ENCODE measurements at regions of chr2 and their contacts with region 1.

Region 1: GRCh38 chr2:189466660-189467059 is 25.4 kb downstream of the WDR75 start:
- DNase-seq: no peak
- H3K4me3 ChIP-seq: no peak overlapping the region
- H3K27ac ChIP-seq: no peak overlapping the region
- H3K4me1 ChIP-seq: no peaks in the 10 kb centered on the region
- H3K27me3 ChIP-seq: no peaks in the 10 kb centered on the region
- CTCF ChIP-seq: peak; percentile 67

Region 2: DNA sequence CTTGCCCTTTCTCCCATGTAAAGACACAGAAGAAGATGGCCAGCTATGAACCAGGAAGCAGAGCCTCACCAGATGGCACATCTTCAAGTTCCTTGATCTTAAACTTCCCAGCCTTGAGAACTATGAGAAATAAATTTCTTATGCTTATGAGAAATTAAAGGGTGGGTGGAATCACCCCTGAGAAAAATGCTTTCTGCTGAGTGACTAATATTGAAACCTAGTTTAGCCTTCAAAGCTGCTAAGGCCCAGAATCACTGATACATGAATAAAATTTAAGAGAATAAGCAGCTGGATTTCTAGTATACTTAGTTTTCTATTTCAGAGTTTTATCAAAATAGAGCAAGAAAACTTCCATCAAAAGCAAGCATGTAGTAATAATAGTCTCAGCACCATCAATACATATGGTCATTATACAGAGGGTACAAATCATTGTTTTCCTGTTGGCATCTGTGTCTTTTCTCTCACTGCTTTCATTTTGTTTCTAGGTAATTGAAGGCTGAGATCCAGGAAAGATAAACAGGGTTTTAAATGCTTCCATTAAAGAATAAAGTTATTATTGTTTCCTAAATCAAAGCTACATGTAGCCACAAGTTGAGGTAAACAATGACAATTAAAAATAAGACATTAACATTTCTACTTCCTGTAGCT is 233.8 kb before region 1 on chr2:
- CTCF ChIA-PET with region 1: no interaction called
- POLR2A ChIA-PET with region 1: no interaction called
- intact Hi-C with region 1: no loop called
- DNase-seq: no peak
- H3K4me3 ChIP-seq: no peak overlapping the region
- H3K27ac ChIP-seq: no peak overlapping the region
- H3K4me1 ChIP-seq: no peaks in the 10 kb centered on the region
- H3K27me3 ChIP-seq: no peaks in the 10 kb centered on the region
- CTCF ChIP-seq: no peak

Region 3: DNA sequence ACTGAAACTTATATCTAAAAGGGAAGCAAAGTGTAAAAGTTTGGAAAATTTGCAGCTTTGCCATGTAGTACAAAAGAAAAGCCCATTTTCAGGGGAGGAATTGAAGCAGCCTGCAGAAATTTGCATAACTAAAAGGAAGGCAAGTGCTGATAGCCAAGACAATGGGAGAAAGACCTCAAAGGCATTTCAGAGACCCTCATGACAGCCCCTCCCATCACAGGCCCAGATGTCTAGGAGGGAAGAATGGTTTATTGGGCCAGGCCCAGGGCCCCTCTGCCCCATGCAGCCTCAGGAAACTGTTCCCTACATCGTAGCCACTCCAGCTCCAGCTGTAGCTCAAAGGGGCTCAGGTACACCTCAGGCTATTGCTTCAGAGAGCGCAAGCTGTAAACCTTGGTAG is 39.8 kb before region 1 on chr2:
- CTCF ChIA-PET with region 1: no interaction called
- POLR2A ChIA-PET with region 1: no interaction called
- intact Hi-C with region 1: no loop called
- DNase-seq: no peak
- H3K4me3 ChIP-seq: no peak overlapping the region
- H3K27ac ChIP-seq: no peak overlapping the region
- H3K4me1 ChIP-seq: no peaks in the 10 kb centered on the region
- H3K27me3 ChIP-seq: no peaks in the 10 kb centered on the region
- CTCF ChIP-seq: no peak

Region 4: GRCh38 chr2:189552334-189552990 is 85.8 kb after region 1 on chr2:
- CTCF ChIA-PET with region 1: no interaction called
- POLR2A ChIA-PET with region 1: interaction called, 43 read pairs
- intact Hi-C with region 1: no loop called
- DNase-seq: no peak
- H3K4me3 ChIP-seq: no peak overlapping the region
- H3K27ac ChIP-seq: no peak overlapping the region
- H3K4me1 ChIP-seq: peaks cover 22% of the 10 kb centered on the region
- H3K27me3 ChIP-seq: no peaks in the 10 kb centered on the region
- CTCF ChIP-seq: no peak

Region 5: GRCh38 chr2:189635353-189635752 is 168.7 kb after region 1 on chr2:
- CTCF ChIA-PET with region 1: no interaction called
- POLR2A ChIA-PET with region 1: no interaction called
- intact Hi-C with region 1: loop called (anchors 2 kb)
- DNase-seq: no peak
- H3K4me3 ChIP-seq: no peak overlapping the region
- H3K27ac ChIP-seq: no peak overlapping the region
- H3K4me1 ChIP-seq: no peaks in the 10 kb centered on the region
- H3K27me3 ChIP-seq: no peaks in the 10 kb centered on the region
- CTCF ChIP-seq: no peak

Region 6: DNA sequence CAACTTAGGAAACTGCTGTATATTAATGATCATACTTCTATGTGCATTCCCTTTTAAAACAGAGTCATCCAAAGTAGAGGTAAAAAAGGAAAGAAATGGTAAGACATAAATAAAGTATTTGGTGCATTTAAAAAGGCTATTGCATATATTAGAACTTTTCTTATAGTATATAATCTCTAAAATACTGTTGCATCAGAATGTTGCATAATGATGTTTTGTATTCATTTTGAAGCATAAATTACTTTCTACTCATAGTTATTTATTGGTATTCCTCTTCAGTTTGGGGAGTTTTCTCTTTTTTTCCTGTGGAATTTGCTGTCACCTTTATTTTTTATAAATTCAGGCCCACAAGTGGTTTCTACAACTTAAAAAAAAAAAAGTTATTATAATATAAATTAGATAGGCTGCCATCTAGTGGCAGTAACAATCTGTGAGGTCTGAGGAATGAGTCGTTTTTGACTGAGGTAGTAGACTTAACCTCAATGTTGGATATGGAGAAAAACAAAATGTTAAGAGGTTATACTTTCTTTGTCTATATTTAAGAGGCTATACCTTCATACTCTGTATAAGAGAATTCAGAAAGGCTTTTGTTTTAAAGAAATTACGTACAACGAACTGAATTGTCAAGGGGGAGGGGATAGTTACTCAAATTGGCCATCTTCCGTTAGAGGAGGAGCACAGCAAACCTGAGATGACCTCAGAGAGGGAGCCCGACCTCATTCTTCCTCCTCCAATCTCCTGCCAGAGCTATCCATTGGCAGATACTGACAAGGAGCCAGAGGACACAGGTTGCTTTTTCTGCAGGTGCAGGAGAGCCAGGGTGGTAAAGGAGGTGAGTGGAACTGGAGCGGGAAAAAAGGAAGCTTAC is 231.6 kb after region 1 on chr2:
- CTCF ChIA-PET with region 1: no interaction called
- POLR2A ChIA-PET with region 1: no interaction called
- intact Hi-C with region 1: loop called (anchors 1 kb)
- DNase-seq: peak in 1 of 2 experiments; percentile 46
- H3K4me3 ChIP-seq: no peak overlapping the region
- H3K27ac ChIP-seq: no peak overlapping the region
- H3K4me1 ChIP-seq: no peaks in the 10 kb centered on the region
- H3K27me3 ChIP-seq: no peaks in the 10 kb centered on the region
- CTCF ChIP-seq: peak; percentile 65

Region 7: DNA sequence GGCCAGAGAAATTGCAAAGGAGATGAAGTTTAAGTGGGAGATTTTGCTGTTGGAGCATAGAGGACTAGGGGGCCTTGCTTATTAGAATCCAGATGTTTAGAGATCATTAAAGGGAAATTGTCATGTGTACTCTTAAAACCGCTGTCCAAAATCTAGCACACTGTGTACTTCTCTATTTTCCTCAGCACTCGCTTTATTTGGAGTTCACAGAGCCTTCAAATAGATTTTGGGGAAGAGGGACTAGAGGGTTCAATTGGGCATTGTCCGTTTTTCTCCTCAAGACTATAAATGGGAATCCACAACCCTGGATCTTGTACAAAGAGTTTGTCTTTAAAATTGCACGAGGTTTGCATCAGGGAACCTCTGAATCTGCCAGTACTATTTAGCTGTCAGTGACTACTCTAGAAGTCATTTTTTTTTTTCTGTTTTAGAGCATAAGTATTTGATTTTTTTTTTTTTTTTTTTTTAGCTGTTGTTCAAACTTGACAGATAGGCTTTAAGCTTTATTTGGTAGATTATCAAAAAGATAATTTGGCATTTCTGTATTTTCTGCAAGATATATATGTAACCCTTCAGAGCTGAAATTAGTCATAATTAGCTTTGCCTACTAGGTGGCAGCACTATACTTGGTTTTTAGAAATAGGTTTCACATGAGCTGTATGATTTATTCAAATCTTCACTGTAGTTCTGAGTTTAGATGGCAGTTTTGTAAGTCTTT is 331.8 kb after region 1 on chr2:
- CTCF ChIA-PET with region 1: no interaction called
- POLR2A ChIA-PET with region 1: no interaction called
- intact Hi-C with region 1: no loop called
- DNase-seq: no peak
- H3K4me3 ChIP-seq: no peak overlapping the region
- H3K27ac ChIP-seq: no peak overlapping the region
- H3K4me1 ChIP-seq: no peaks in the 10 kb centered on the region
- H3K27me3 ChIP-seq: no peaks in the 10 kb centered on the region
- CTCF ChIP-seq: peak; percentile 55